GM10248 (cell line): ENCODE measurements at regions of chr12 and their contacts with region 1.

Region 1: GRCh38 chr12:96578526-96579125 is 89.2 kb downstream of the CFAP54 start:
- DNase-seq: peak; percentile 44
- CTCF ChIP-seq: peak; percentile 52

Region 2: DNA sequence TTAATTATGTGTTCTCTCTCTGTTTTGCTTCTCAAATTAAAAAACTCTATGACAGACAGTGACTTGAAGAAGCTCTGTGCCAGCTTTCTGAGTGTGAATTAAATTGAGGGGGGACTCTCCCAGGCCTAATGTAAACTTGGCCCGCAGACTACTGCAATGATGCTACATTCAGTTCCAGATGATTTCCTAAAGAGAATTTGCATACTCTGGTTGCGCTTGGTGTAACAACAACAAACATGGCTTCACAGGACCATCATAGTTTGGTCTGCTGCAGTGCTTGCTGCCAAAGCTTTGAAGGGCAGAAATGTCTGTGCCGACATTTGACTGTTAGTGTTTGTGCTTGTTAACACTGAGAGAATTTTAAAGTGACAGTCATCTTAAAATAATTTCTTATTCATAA is 64.3 kb before region 1 on chr12:
- CTCF ChIA-PET with region 1: no interaction called
- POLR2A ChIA-PET with region 1: no interaction called
- DNase-seq: peak; percentile 40
- CTCF ChIP-seq: no peak

Region 3: GRCh38 chr12:96617178-96617577 is 38.6 kb after region 1 on chr12:
- CTCF ChIA-PET with region 1: no interaction called
- POLR2A ChIA-PET with region 1: no interaction called
- DNase-seq: no peak
- CTCF ChIP-seq: no peak

Region 4: GRCh38 chr12:96985480-96986362 is 407.1 kb after region 1 on chr12:
- CTCF ChIA-PET with region 1: interaction called, 15 read pairs
- POLR2A ChIA-PET with region 1: no interaction called
- DNase-seq: peak; percentile 74
- CTCF ChIP-seq: peak; percentile 91